ENCODE measurements at regions of chr15 and their contacts with region 1.

Region 1: GRCh38 chr15:78565097-78565951 is at the start of gene CHRNA5:
- DNase-seq: peak; percentile 88
- ATAC-seq: peak; percentile 81
- H3K4me3 ChIP-seq: peak within 1 kb of the TSS; percentile 77
- H3K27ac ChIP-seq: 0 out of 2 replicates have a peak within 1 kb of the TSS, but pooled peaks have one; percentile 26
- H3K4me1 ChIP-seq: peaks cover 4% of the 10 kb centered on the region
- H3K27me3 ChIP-seq: no peaks in the 10 kb centered on the region
- CTCF ChIP-seq: no peak
- total RNA-seq, gene CHRNA5: 8.4 and 11.0 TPM in 2 replicates

Region 2: DNA sequence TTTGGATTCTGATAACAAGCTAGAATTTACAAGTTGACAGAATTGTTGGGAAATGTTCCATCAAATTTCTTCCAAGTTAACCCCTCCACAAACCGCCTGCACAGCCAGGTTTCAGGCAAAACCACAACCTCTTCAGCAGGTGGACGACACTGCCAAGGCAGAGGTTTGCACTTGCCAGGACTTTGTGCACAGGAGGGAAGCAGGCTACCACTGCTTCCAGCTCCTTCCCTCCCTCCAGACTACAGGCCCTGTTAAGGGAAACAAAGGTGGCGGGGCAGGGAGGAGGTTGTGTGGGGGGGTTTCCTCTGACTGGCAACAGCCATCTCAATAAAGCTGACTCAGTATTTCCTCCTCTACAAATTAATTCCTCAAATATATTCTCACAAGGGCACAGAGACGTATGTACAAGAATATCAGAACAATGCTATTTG is 530.0 kb before region 1 on chr15:
- CTCF ChIA-PET with region 1: no interaction called
- POLR2A ChIA-PET with region 1: interaction called, 24 read pairs
- intact Hi-C with region 1: no loop called
- DNase-seq: no peak
- ATAC-seq: no peak; the same call in 1 of the 2 replicates
- H3K4me3 ChIP-seq: no peak overlapping the region
- H3K27ac ChIP-seq: no peak overlapping the region
- H3K4me1 ChIP-seq: no peaks in the 10 kb centered on the region
- H3K27me3 ChIP-seq: no peaks in the 10 kb centered on the region
- CTCF ChIP-seq: no peak

Region 3: DNA sequence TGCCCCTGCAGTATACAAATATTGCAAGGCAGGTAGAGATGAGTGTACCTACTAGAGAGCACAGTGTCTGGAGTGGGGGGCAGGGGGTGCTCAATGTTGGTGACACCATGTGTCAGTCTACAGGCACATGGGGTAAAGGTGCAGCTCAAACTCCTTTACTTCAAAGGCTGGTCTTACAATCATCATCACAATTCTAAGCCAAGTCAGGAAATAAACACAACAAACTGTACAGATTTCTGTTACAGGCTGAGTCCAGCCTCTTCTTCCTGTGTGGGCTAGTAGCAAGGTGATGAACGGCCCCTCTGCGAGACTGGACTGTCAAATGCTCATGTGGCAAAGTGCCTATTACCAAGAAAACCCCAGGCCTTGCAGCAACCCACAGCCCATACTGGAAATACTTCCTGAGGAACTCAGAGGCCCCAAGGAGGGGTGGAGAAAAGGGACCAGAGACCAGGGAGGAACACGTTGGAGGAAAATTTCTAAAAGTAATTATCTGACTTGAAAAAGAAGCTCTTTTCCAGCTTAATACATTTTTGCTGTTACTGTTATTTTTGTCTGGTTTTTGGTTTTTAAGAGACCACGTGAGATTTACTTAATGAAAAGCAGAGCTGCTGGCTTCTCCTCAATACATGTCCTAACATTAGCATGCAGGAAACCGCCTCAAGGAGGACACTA is 517.5 kb before region 1 on chr15:
- CTCF ChIA-PET with region 1: no interaction called
- POLR2A ChIA-PET with region 1: no interaction called
- intact Hi-C with region 1: no loop called
- DNase-seq: no peak
- ATAC-seq: no peak
- H3K4me3 ChIP-seq: no peak overlapping the region
- H3K27ac ChIP-seq: no peak overlapping the region
- H3K4me1 ChIP-seq: peaks cover 7% of the 10 kb centered on the region; the same call in 1 of the 2 replicates
- H3K27me3 ChIP-seq: no peaks in the 10 kb centered on the region
- CTCF ChIP-seq: no peak